ENCODE measurements at regions of chr21 and their contacts with region 1.

Region 1: DNA sequence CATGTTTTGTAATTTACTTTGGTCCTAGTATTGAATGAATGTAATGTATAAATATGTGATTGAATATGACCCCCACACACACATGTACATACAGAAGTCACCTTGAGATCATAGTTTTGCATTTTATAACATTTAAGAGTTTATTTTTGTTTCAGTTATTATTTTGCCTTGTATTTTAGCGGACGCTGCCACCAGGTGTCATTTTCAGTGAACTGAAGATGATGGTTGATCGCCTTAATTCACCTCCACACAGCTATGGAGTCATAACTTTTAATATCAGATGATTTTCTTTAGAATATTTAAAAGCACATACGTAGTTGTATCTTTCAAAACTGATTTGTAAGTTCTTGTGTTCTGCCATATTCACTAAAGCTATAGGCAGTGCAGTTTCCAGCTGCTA is 130.4 kb downstream of the DYRK1A start:
- DNase-seq: no peak
- ATAC-seq: peak; percentile 35; the same call in 1 of the 3 replicates
- H3K4me3 ChIP-seq: no peak overlapping the region
- H3K27ac ChIP-seq: no peak overlapping the region
- H3K4me1 ChIP-seq: no peaks in the 10 kb centered on the region
- H3K27me3 ChIP-seq: no peaks in the 10 kb centered on the region
- CTCF ChIP-seq: peak in 1 of 3 experiments; percentile 19; a peak in 1 of 6 replicates
- EP300 ChIP-seq: no peak
- POLR2A ChIP-seq: no peak
- RAD21 ChIP-seq: peak; percentile 25; the same call in 1 of the 2 replicates

Region 2: GRCh38 chr21:37166733-37167132 is 330.2 kb before region 1 on chr21:
- CTCF ChIA-PET with region 1: interaction called, 18 read pairs
- POLR2A ChIA-PET with region 1: no interaction called
- RAD21 ChIA-PET with region 1: interaction called, 6 read pairs
- SMC1A ChIA-PET with region 1: interaction called, 6 read pairs
- in situ Hi-C with region 1: no loop called
- intact Hi-C with region 1: loop called (anchors 10 kb)
- DNase-seq: no peak
- ATAC-seq: peak; percentile 73
- H3K4me3 ChIP-seq: no peak overlapping the region
- H3K27ac ChIP-seq: no peak overlapping the region
- H3K4me1 ChIP-seq: no peaks in the 10 kb centered on the region
- H3K27me3 ChIP-seq: no peaks in the 10 kb centered on the region
- CTCF ChIP-seq: peak; percentile 24 to 56 (median 33); a peak in 4 of 6 replicates
- EP300 ChIP-seq: no peak
- POLR2A ChIP-seq: no peak
- RAD21 ChIP-seq: peak; percentile 69

Region 3: DNA sequence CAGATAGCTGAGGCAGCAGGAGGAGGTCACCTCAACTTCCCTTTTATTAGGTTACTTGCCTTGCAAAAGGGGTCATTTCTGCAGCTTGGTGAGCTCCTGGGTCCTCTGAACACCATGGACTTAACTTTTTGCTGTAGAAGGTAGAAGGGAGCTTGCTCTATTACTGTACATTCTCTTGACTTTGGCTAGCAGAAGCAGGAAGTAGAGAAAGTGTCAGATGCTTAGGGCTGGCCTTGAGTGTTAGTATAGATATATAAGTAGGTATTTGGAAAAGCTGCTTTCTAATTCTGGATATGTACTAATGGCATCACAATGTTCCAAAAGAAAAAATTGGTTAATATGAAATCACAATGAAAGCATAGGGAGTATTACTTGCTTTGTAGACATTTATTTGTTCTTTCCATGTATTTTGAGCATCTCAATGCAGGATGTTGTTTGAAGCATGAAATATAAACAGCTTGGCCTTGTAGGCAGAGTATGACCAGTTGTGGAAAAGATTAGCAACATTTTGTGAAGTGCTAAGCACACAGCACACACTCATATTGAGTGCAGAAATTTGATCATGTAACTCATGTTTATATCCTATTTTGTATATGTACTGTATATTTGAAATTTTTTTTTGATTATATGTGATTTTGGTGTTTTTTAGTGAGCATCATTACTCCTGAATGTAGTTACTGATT is 21.6 kb before region 1 on chr21:
- CTCF ChIA-PET with region 1: interaction called, 7 read pairs
- POLR2A ChIA-PET with region 1: interaction called, 3 read pairs
- RAD21 ChIA-PET with region 1: no interaction called
- SMC1A ChIA-PET with region 1: interaction called, 11 read pairs
- in situ Hi-C with region 1: no loop called
- intact Hi-C with region 1: no loop called
- DNase-seq: no peak
- ATAC-seq: peak; percentile 26; the same call in 2 of the 3 replicates
- H3K4me3 ChIP-seq: no peak overlapping the region
- H3K27ac ChIP-seq: no peak overlapping the region
- H3K4me1 ChIP-seq: no peaks in the 10 kb centered on the region
- H3K27me3 ChIP-seq: no peaks in the 10 kb centered on the region
- CTCF ChIP-seq: no peak
- EP300 ChIP-seq: no peak
- POLR2A ChIP-seq: no peak
- RAD21 ChIP-seq: no peak

Measured in GM12878 (cell line).